ENCODE measurements at regions of chr17 and their contacts with region 1.

Region 1: GRCh38 chr17:51533219-51533618 is 272.9 kb downstream of the UTP18 start:
- DNase-seq: no peak
- H3K4me3 ChIP-seq: no peak overlapping the region
- H3K27ac ChIP-seq: no peak overlapping the region
- H3K4me1 ChIP-seq: peaks cover 0 to 4% (median 0%) of the 10 kb centered on the region in 4 experiments; a peak in 1 of 7 replicates
- H3K27me3 ChIP-seq: no peaks in the 10 kb centered on the region
- CTCF ChIP-seq: no peak
- EP300 ChIP-seq: no peak
- POLR2A ChIP-seq: no peak
- RAD21 ChIP-seq: no peak

Region 2: GRCh38 chr17:51298508-51299371 is 234.5 kb before region 1 on chr17:
- CTCF ChIA-PET with region 1: interaction called, 27 read pairs
- POLR2A ChIA-PET with region 1: no interaction called
- DNase-seq: no peak
- H3K4me3 ChIP-seq: no peak overlapping the region
- H3K27ac ChIP-seq: no peak overlapping the region
- H3K4me1 ChIP-seq: peaks cover 0 to 11% (median 3%) of the 10 kb centered on the region in 4 experiments; a peak in 2 of 7 replicates
- H3K27me3 ChIP-seq: no peaks in the 10 kb centered on the region
- CTCF ChIP-seq: peak in 2 of 3 experiments; percentile 68 to 83; a peak in 3 of 4 replicates
- EP300 ChIP-seq: no peak
- POLR2A ChIP-seq: 0 out of 3 replicates have a peak, but pooled peaks of 1 of the 2 experiments have one; percentile 8
- RAD21 ChIP-seq: peak; percentile 80 to 87

Region 3: GRCh38 chr17:51378059-51378458 is 155.2 kb before region 1 on chr17:
- CTCF ChIA-PET with region 1: interaction called, 16 read pairs
- POLR2A ChIA-PET with region 1: no interaction called
- DNase-seq: no peak
- H3K4me3 ChIP-seq: no peak overlapping the region
- H3K27ac ChIP-seq: no peak overlapping the region
- H3K4me1 ChIP-seq: peaks cover 0 to 10% (median 7%) of the 10 kb centered on the region in 4 experiments; a peak in 3 of 7 replicates
- H3K27me3 ChIP-seq: no peaks in the 10 kb centered on the region
- CTCF ChIP-seq: no peak
- EP300 ChIP-seq: no peak
- POLR2A ChIP-seq: no peak
- RAD21 ChIP-seq: no peak

Region 4: GRCh38 chr17:51487947-51488346 is 45.3 kb before region 1 on chr17:
- CTCF ChIA-PET with region 1: interaction called, 11 read pairs
- POLR2A ChIA-PET with region 1: no interaction called
- DNase-seq: peak in 1 of 2 experiments; percentile 69
- H3K4me3 ChIP-seq: no peak overlapping the region
- H3K27ac ChIP-seq: no peak overlapping the region
- H3K4me1 ChIP-seq: no peaks in the 10 kb centered on the region
- H3K27me3 ChIP-seq: no peaks in the 10 kb centered on the region
- CTCF ChIP-seq: peak; percentile 57 to 86 (median 58)
- EP300 ChIP-seq: no peak
- POLR2A ChIP-seq: no peak
- RAD21 ChIP-seq: peak; percentile 37 to 54

Measured in H1 (cell line).